CD8-positive, alpha-beta T cell (primary cell): ENCODE measurements at regions of chr3 and their contacts with region 1.

Region 1: DNA sequence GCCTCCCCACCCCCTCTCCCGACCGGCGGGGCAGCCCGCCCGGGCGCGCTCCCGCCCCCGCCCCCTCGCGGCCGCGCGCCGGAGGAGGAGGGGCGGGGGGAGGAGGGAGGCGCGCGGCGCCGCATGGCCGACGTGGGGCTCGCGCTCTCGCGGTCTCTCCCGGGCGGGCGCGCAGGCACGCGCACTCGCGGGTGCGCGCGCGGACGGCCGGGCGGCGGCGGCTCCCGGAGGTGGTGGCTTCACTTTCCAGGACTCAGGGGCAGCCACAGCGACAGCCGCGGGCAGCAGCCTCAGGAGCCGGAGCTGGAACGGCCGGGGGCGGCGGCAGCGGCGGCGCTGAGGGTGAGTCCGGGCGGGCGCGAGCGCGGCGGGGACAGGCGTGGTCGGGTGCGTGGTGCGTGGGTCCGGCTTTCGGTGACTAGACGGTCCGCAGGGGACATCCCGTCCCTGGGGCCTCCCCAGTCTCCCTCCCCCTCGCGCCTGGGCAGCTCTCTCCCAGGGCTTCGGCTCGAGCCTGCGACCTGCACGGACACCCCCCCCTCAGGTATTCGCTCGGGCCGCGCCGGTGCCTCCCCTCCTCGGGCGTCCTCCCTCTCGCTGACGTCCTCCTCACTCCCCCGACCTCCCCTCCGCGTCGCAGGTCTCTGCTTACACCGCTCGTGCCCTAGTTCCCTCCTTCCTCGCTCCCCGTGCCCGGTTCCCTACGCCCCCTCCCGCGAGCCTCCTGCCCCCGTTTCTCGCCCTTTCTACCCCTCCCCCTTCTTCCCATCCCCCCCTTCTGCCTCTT is at the start of gene UBE2E2:
- DNase-seq: peak; percentile 26 to 82 (median 48)
- ATAC-seq: peak; percentile 66
- H3K4me3 ChIP-seq: peak within 1 kb of the TSS; percentile 73 to 74
- H3K4me3 Mint-ChIP-seq: peak within 1 kb of the TSS; percentile 94
- H3K27ac ChIP-seq: peak within 1 kb of the TSS in 1 of 2 experiments; percentile 51
- H3K27ac Mint-ChIP-seq: peak within 1 kb of the TSS; percentile 89
- H3K4me1 ChIP-seq: peaks cover 6% of the 10 kb centered on the region
- H3K4me1 Mint-ChIP-seq: peaks cover 28% of the 10 kb centered on the region
- H3K27me3 ChIP-seq: peaks cover 0 to 10% of the 10 kb centered on the region in 2 experiments
- H3K27me3 Mint-ChIP-seq: peaks cover 12% of the 10 kb centered on the region
- CTCF ChIP-seq: no peak
- total RNA-seq, gene UBE2E2: 9.5 to 14.2 TPM

Region 2: DNA sequence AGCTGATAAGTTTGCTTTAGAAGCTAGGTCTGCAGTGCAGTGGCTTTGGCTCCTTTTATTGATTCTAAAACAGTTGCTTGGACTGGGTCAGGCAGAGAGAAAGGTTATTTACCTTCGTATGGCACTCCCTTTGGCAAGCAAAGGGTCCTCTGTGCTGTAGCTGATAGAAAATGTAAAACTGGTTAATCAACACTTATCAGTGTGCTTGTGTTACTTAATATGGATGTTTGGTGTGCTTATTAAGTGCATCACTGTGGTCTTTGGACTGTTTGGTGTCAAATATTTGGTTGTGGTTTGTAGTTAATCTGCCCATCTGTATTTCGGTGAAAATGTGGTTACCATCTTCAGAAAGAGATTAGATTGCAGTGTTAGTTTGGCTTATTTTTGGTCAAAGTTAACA is 16.0 kb after region 1 on chr3:
- CTCF ChIA-PET with region 1: no interaction called
- POLR2A ChIA-PET with region 1: no interaction called
- intact Hi-C with region 1: no loop called
- DNase-seq: no peak
- ATAC-seq: no peak
- H3K4me3 ChIP-seq: no peak overlapping the region
- H3K4me3 Mint-ChIP-seq: no peak overlapping the region
- H3K27ac ChIP-seq: no peak overlapping the region
- H3K27ac Mint-ChIP-seq: no peak overlapping the region
- H3K4me1 ChIP-seq: peaks cover 5% of the 10 kb centered on the region
- H3K4me1 Mint-ChIP-seq: peaks cover 22% of the 10 kb centered on the region
- H3K27me3 ChIP-seq: no peaks in the 10 kb centered on the region
- H3K27me3 Mint-ChIP-seq: no peaks in the 10 kb centered on the region
- CTCF ChIP-seq: no peak

Region 3: GRCh38 chr3:23239211-23240068 is 36.3 kb after region 1 on chr3:
- CTCF ChIA-PET with region 1: no interaction called
- POLR2A ChIA-PET with region 1: no interaction called
- intact Hi-C with region 1: no loop called
- DNase-seq: no peak
- ATAC-seq: no peak
- H3K4me3 ChIP-seq: no peak overlapping the region
- H3K4me3 Mint-ChIP-seq: no peak overlapping the region
- H3K27ac ChIP-seq: no peak overlapping the region
- H3K27ac Mint-ChIP-seq: no peak overlapping the region
- H3K4me1 ChIP-seq: no peaks in the 10 kb centered on the region
- H3K4me1 Mint-ChIP-seq: peaks cover 28% of the 10 kb centered on the region
- H3K27me3 ChIP-seq: no peaks in the 10 kb centered on the region
- H3K27me3 Mint-ChIP-seq: no peaks in the 10 kb centered on the region
- CTCF ChIP-seq: no peak

Region 4: DNA sequence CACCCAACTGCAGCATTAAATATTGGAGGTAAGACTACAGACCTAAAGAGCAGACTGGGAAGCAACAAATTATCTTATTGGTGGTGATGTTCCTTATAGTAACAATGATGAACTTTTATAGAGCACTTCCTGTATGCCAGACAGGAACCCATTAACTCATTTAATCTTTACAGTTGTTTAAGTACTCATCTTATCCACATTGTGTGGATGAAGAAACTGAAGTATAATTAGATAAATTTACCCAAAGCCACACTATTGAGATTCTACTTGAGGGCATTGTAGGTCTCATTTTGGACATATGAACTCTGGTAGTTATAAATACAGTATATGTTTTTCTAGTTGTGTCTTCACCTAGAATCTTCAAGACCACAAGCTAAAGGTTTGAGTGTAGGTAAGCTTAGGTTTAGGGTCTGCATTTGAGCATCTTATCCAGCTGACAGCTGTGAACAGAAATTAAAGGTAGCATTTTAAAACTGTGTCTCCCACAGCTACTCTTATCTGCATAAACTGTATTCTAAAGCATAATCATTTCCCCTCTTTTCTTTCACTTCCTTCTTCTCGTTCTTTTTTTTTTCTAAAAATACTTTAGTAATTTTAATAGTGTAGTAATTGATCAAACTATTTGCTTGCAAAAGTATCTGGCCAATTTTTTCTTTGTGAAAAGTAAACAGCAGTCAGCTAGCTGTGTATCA is 138.2 kb after region 1 on chr3:
- CTCF ChIA-PET with region 1: no interaction called
- POLR2A ChIA-PET with region 1: no interaction called
- intact Hi-C with region 1: no loop called
- DNase-seq: no peak
- ATAC-seq: no peak
- H3K4me3 ChIP-seq: no peak overlapping the region
- H3K4me3 Mint-ChIP-seq: no peak overlapping the region
- H3K27ac ChIP-seq: no peak overlapping the region
- H3K27ac Mint-ChIP-seq: no peak overlapping the region
- H3K4me1 ChIP-seq: no peaks in the 10 kb centered on the region
- H3K4me1 Mint-ChIP-seq: peaks cover 17% of the 10 kb centered on the region
- H3K27me3 ChIP-seq: no peaks in the 10 kb centered on the region
- H3K27me3 Mint-ChIP-seq: no peaks in the 10 kb centered on the region
- CTCF ChIP-seq: no peak

Region 5: GRCh38 chr3:23442598-23443383 is 239.7 kb after region 1 on chr3:
- CTCF ChIA-PET with region 1: no interaction called
- POLR2A ChIA-PET with region 1: no interaction called
- intact Hi-C with region 1: loop called in 1 of 2 experiments (anchors 10 kb)
- DNase-seq: peak in 2 of 9 experiments; percentile 39 to 64
- ATAC-seq: peak; percentile 64
- H3K4me3 ChIP-seq: no peak overlapping the region
- H3K4me3 Mint-ChIP-seq: no peak overlapping the region
- H3K27ac ChIP-seq: no peak overlapping the region
- H3K27ac Mint-ChIP-seq: no peak overlapping the region
- H3K4me1 ChIP-seq: peaks cover 29% of the 10 kb centered on the region
- H3K4me1 Mint-ChIP-seq: peaks cover 36% of the 10 kb centered on the region
- H3K27me3 ChIP-seq: no peaks in the 10 kb centered on the region
- H3K27me3 Mint-ChIP-seq: no peaks in the 10 kb centered on the region
- CTCF ChIP-seq: no peak

Region 6: GRCh38 chr3:23800731-23801130 is 597.6 kb after region 1 on chr3:
- CTCF ChIA-PET with region 1: no interaction called
- POLR2A ChIA-PET with region 1: no interaction called
- intact Hi-C with region 1: loop called (anchors 5 kb)
- DNase-seq: peak in 2 of 9 experiments; percentile 9 to 20
- ATAC-seq: no peak
- H3K4me3 ChIP-seq: no peak overlapping the region
- H3K4me3 Mint-ChIP-seq: no peak overlapping the region
- H3K27ac ChIP-seq: no peak overlapping the region
- H3K27ac Mint-ChIP-seq: no peak overlapping the region
- H3K4me1 ChIP-seq: peaks cover 6% of the 10 kb centered on the region
- H3K4me1 Mint-ChIP-seq: peaks cover 10% of the 10 kb centered on the region
- H3K27me3 ChIP-seq: no peaks in the 10 kb centered on the region
- H3K27me3 Mint-ChIP-seq: no peaks in the 10 kb centered on the region
- CTCF ChIP-seq: no peak

Region 7: GRCh38 chr3:23805633-23806533 is 602.8 kb after region 1 on chr3 and contains the start of gene UBE2E1:
- CTCF ChIA-PET with region 1: no interaction called
- POLR2A ChIA-PET with region 1: no interaction called
- intact Hi-C with region 1: loop called (anchors 5 kb)
- DNase-seq: peak; percentile 53 to 92 (median 72)
- ATAC-seq: peak; percentile 82
- H3K4me3 ChIP-seq: peak within 1 kb of the TSS; percentile 59 to 63
- H3K4me3 Mint-ChIP-seq: peak within 1 kb of the TSS; percentile 97
- H3K27ac ChIP-seq: peak within 1 kb of the TSS; percentile 28 to 33
- H3K27ac Mint-ChIP-seq: peak within 1 kb of the TSS; percentile 98
- H3K4me1 ChIP-seq: peaks cover 27% of the 10 kb centered on the region
- H3K4me1 Mint-ChIP-seq: peaks cover 47% of the 10 kb centered on the region
- H3K27me3 ChIP-seq: no peaks in the 10 kb centered on the region
- H3K27me3 Mint-ChIP-seq: no peaks in the 10 kb centered on the region
- CTCF ChIP-seq: no peak
- total RNA-seq, gene UBE2E1: 39.8 to 40.6 TPM